ENCODE measurements at regions of chr12 and their contacts with region 1.

Region 1: GRCh38 chr12:30219047-30219446 is 435.3 kb upstream of the TMTC1 start:
- DNase-seq: no peak
- ATAC-seq: no peak
- H3K4me3 Mint-ChIP-seq: no peak overlapping the region
- H3K27ac Mint-ChIP-seq: no peak overlapping the region
- H3K4me1 Mint-ChIP-seq: no peaks in the 10 kb centered on the region
- H3K27me3 Mint-ChIP-seq: peaks cover 1% of the 10 kb centered on the region

Region 2: GRCh38 chr12:30178916-30179315 is 40.1 kb before region 1 on chr12:
- CTCF ChIA-PET with region 1: no interaction called
- POLR2A ChIA-PET with region 1: no interaction called
- intact Hi-C with region 1: loop called in 1 of 2 experiments (anchors 5 kb)
- DNase-seq: no peak
- ATAC-seq: no peak
- H3K4me3 Mint-ChIP-seq: no peak overlapping the region
- H3K27ac Mint-ChIP-seq: no peak overlapping the region
- H3K4me1 Mint-ChIP-seq: no peaks in the 10 kb centered on the region
- H3K27me3 Mint-ChIP-seq: no peaks in the 10 kb centered on the region

Region 3: GRCh38 chr12:30357736-30358490 is 138.9 kb after region 1 on chr12:
- CTCF ChIA-PET with region 1: no interaction called
- POLR2A ChIA-PET with region 1: no interaction called
- intact Hi-C with region 1: no loop called
- DNase-seq: no peak
- ATAC-seq: no peak
- H3K4me3 Mint-ChIP-seq: no peak overlapping the region
- H3K27ac Mint-ChIP-seq: no peak overlapping the region
- H3K4me1 Mint-ChIP-seq: no peaks in the 10 kb centered on the region
- H3K27me3 Mint-ChIP-seq: no peaks in the 10 kb centered on the region

Measured in activated CD4-positive, alpha-beta T cell treated with anti-CD3 and anti-CD28 coated beads for 36 hours (primary cell).